Ascending aorta (tissue), 2 donors: ENCODE measurements at regions of chr12 and their contacts with region 1.

Region 1: DNA sequence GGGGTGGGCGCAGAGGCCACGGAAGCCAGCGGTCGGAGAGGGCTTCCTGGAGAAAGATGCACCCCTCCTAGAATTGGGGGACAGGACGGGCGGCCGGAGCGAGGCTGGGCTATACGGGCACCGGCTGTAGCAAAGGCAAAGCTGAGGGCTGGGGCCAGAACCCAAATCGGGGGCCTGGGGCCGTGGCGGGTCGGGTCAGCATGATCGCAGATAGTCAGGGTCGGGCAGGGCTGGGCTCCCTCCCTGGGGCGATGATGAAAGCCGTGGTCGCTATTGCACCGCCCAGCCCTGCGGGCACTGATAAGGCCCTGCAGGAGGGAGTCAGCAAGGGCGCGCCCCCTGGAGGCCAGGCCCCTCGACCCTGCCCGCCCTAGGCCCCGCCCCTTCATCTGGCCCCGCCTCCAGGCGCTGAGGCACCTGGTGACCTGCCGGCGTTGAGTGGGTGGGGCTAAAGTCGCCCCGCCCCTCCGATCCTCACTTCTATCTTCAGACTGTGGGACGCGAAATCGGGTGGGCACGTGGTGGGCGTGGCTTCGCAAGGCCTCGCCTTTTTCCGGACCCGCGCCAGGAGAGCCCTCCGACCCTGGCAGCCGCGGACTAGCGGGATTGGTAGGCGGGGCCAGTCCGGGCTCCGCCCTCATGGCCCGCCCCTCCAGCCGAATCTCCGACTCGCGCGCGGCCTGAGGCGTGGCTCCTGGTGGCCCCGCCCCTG is 418 bp upstream of the SH2B3 start:
- DNase-seq: peak; percentile 90 to 96
- H3K4me3 ChIP-seq: peak overlapping the region; percentile 83 to 90
- H3K27ac ChIP-seq: peak overlapping the region; percentile 72 to 91
- H3K4me1 ChIP-seq: peaks cover 10 to 33% of the 10 kb centered on the region in 2 donors
- H3K27me3 ChIP-seq: no peaks in the 10 kb centered on the region
- CTCF ChIP-seq: peak; percentile 40 to 61 (median 53)

Region 2: DNA sequence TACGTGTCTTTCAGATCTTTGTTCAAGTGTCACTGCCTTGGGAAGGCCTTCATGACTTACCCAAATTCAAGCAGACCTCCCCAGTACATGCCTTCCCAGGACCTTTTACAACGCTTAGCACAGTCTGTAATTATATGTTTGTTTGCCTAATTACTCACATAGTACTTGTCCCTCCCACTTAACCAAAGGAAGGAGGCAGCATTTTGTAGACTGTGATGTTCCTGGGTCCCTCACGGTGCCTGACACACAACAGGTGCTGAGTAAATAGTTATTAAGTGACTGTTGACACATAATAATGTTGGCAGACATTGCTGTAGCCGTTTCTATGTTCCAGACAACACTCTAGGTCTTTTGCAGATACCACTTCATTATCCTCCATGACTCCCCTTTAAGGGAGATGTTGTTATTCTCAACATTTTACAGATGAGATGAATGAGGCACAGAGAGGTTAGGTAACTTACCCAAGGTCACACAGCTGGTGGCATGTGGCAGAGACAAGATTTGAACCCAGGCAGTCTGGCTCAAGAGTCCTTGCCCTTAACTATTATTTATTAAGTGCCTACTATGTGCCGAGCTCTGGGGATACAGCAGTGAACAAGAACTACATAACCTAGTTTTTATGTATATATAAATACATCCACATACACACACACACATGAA is 167.1 kb before region 1 on chr12:
- intact Hi-C with region 1: no loop called
- DNase-seq: no peak
- H3K4me3 ChIP-seq: no peak overlapping the region
- H3K27ac ChIP-seq: no peak overlapping the region
- H3K4me1 ChIP-seq: no peaks in the 10 kb centered on the region
- H3K27me3 ChIP-seq: no peaks in the 10 kb centered on the region
- CTCF ChIP-seq: no peak

Region 3: GRCh38 chr12:111368788-111369495 is 36.4 kb before region 1 on chr12 and contains the start of gene PHETA1:
- intact Hi-C with region 1: loop called (anchors 2 kb)
- DNase-seq: peak; percentile 56 to 96
- H3K4me3 ChIP-seq: peak within 1 kb of the TSS; percentile 79 to 91
- H3K27ac ChIP-seq: peak within 1 kb of the TSS; percentile 67 to 69
- H3K4me1 ChIP-seq: peaks cover 0 to 9% of the 10 kb centered on the region in 2 donors
- H3K27me3 ChIP-seq: no peaks in the 10 kb centered on the region
- CTCF ChIP-seq: no peak
- total RNA-seq, gene PHETA1: 12.9 TPM

Region 4: GRCh38 chr12:111434680-111435338 is 29.5 kb after region 1 on chr12:
- intact Hi-C with region 1: loop called (anchors 2 kb)
- DNase-seq: peak in 1 of 2 donors; percentile 79
- H3K4me3 ChIP-seq: peak overlapping the region; percentile 16 to 33
- H3K27ac ChIP-seq: peak overlapping the region; percentile 43 to 72
- H3K4me1 ChIP-seq: peaks cover 19 to 39% of the 10 kb centered on the region in 2 donors
- H3K27me3 ChIP-seq: no peaks in the 10 kb centered on the region
- CTCF ChIP-seq: no peak

Region 5: DNA sequence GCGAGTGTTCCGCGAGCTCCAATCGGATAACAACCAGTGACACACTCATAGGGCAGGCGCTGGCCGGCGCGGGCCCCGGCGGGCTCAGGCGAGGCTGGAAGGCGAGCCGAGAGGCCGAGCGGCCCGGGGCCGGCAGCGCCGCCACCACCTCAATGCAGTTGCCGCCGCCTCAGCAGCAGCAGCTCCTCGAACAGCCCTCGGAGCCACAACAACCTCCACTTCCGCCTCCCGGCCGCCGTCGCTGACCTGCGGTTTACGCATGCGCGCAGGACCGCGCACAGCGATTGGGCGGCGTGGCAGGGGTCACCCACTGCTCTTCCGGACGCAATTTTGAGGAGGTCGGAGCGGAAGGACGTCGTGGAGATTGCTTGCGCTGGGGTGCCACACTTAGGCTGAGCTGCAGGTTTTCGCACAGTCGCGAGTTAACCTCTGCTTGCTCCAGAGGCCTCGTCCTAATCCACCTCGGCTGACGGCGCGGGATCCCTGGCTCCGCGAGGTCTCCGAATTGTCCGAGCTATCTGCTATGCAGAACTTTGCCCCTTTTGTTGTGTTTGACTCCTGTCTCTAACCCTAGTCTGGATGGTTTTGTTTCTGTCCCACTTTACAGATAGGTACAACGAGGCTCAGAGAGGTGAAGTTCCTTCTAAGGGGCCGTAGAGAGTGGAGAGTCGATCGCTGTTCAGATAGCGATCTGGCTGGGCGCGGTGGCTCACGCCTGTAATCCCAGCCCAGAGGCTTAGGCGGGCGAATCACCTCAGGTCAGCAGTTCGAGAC is 280.6 kb after region 1 on chr12 and contains the starts of genes ACAD10 and BRAP:
- intact Hi-C with region 1: loop called (anchors 5 kb)
- DNase-seq: peak; percentile 71 to 96
- H3K4me3 ChIP-seq: peak within 1 kb of the TSS; percentile 78 to 88
- H3K27ac ChIP-seq: peak within 1 kb of the TSS; percentile 82 to 88
- H3K4me1 ChIP-seq: peaks cover 10 to 18% of the 10 kb centered on the region in 2 donors
- H3K27me3 ChIP-seq: no peaks in the 10 kb centered on the region
- CTCF ChIP-seq: no peak
- total RNA-seq, gene ACAD10: 32.0 TPM
- total RNA-seq, gene BRAP: 6.2 TPM